ENCODE measurements at regions of chr15 and their contacts with region 1.

Region 1: GRCh38 chr15:79184465-79184892 is 93.9 kb upstream of the RASGRF1 start:
- DNase-seq: peak; percentile 31 to 70 (median 53)
- H3K4me3 ChIP-seq: no peak overlapping the region
- H3K4me3 Mint-ChIP-seq: no peak overlapping the region
- H3K27ac ChIP-seq: no peak overlapping the region
- H3K27ac Mint-ChIP-seq: no peak overlapping the region
- H3K4me1 ChIP-seq: no peaks in the 10 kb centered on the region
- H3K4me1 Mint-ChIP-seq: no peaks in the 10 kb centered on the region
- H3K27me3 ChIP-seq: no peaks in the 10 kb centered on the region
- H3K27me3 Mint-ChIP-seq: peaks cover 5 to 9% of the 10 kb centered on the region in 2 donors

Region 2: GRCh38 chr15:79041601-79042168 is 142.8 kb before region 1 on chr15:
- CTCF ChIA-PET with region 1: no interaction called
- POLR2A ChIA-PET with region 1: no interaction called
- DNase-seq: no peak
- H3K4me3 ChIP-seq: no peak overlapping the region
- H3K4me3 Mint-ChIP-seq: no peak overlapping the region
- H3K27ac ChIP-seq: no peak overlapping the region
- H3K27ac Mint-ChIP-seq: no peak overlapping the region
- H3K4me1 ChIP-seq: no peaks in the 10 kb centered on the region
- H3K4me1 Mint-ChIP-seq: no peaks in the 10 kb centered on the region
- H3K27me3 ChIP-seq: no peaks in the 10 kb centered on the region
- H3K27me3 Mint-ChIP-seq: peaks cover 13 to 49% of the 10 kb centered on the region in 2 donors

Region 3: GRCh38 chr15:79172032-79172481 is 12.4 kb before region 1 on chr15:
- CTCF ChIA-PET with region 1: interaction called, 21 read pairs
- POLR2A ChIA-PET with region 1: no interaction called
- DNase-seq: no peak
- H3K4me3 ChIP-seq: no peak overlapping the region
- H3K4me3 Mint-ChIP-seq: no peak overlapping the region
- H3K27ac ChIP-seq: no peak overlapping the region
- H3K27ac Mint-ChIP-seq: no peak overlapping the region
- H3K4me1 ChIP-seq: no peaks in the 10 kb centered on the region
- H3K4me1 Mint-ChIP-seq: no peaks in the 10 kb centered on the region
- H3K27me3 ChIP-seq: no peaks in the 10 kb centered on the region
- H3K27me3 Mint-ChIP-seq: peaks cover 20 to 66% of the 10 kb centered on the region in 2 donors

Measured in CD8-positive, alpha-beta memory T cell (primary cell).